Activated CD4-positive, alpha-beta memory T cell treated with anti-CD3 and anti-CD28 coated beads for 36 hours (primary cell): ENCODE measurements at regions of chr9 and their contacts with region 1.

Region 1: GRCh38 chr9:124040935-124041816 is 29.6 kb downstream of the LHX2 start:
- DNase-seq: peak; percentile 62
- H3K4me3 Mint-ChIP-seq: no peak overlapping the region
- H3K27ac Mint-ChIP-seq: no peak overlapping the region
- H3K4me1 Mint-ChIP-seq: peaks cover 13% of the 10 kb centered on the region
- H3K27me3 Mint-ChIP-seq: peaks cover 62% of the 10 kb centered on the region

Region 2: GRCh38 chr9:123544007-123544827 is 497.0 kb before region 1 on chr9:
- CTCF ChIA-PET with region 1: interaction called, 51 read pairs
- POLR2A ChIA-PET with region 1: no interaction called
- intact Hi-C with region 1: loop called (anchors 1 kb)
- DNase-seq: peak; percentile 19
- H3K4me3 Mint-ChIP-seq: no peak overlapping the region
- H3K27ac Mint-ChIP-seq: no peak overlapping the region
- H3K4me1 Mint-ChIP-seq: peaks cover 8% of the 10 kb centered on the region
- H3K27me3 Mint-ChIP-seq: no peaks in the 10 kb centered on the region

Region 3: GRCh38 chr9:123957115-123957721 is 84.0 kb before region 1 on chr9:
- CTCF ChIA-PET with region 1: interaction called, 6 read pairs
- POLR2A ChIA-PET with region 1: no interaction called
- intact Hi-C with region 1: loop called (anchors 2 kb)
- DNase-seq: no peak
- H3K4me3 Mint-ChIP-seq: no peak overlapping the region
- H3K27ac Mint-ChIP-seq: no peak overlapping the region
- H3K4me1 Mint-ChIP-seq: peaks cover 4% of the 10 kb centered on the region
- H3K27me3 Mint-ChIP-seq: peaks cover 17% of the 10 kb centered on the region

Region 4: GRCh38 chr9:124017929-124018729 is 23.0 kb before region 1 on chr9:
- CTCF ChIA-PET with region 1: interaction called, 10 read pairs
- POLR2A ChIA-PET with region 1: no interaction called
- intact Hi-C with region 1: no loop called
- DNase-seq: no peak
- H3K4me3 Mint-ChIP-seq: no peak overlapping the region
- H3K27ac Mint-ChIP-seq: no peak overlapping the region
- H3K4me1 Mint-ChIP-seq: peaks cover 30% of the 10 kb centered on the region
- H3K27me3 Mint-ChIP-seq: peaks cover 82% of the 10 kb centered on the region

Region 5: DNA sequence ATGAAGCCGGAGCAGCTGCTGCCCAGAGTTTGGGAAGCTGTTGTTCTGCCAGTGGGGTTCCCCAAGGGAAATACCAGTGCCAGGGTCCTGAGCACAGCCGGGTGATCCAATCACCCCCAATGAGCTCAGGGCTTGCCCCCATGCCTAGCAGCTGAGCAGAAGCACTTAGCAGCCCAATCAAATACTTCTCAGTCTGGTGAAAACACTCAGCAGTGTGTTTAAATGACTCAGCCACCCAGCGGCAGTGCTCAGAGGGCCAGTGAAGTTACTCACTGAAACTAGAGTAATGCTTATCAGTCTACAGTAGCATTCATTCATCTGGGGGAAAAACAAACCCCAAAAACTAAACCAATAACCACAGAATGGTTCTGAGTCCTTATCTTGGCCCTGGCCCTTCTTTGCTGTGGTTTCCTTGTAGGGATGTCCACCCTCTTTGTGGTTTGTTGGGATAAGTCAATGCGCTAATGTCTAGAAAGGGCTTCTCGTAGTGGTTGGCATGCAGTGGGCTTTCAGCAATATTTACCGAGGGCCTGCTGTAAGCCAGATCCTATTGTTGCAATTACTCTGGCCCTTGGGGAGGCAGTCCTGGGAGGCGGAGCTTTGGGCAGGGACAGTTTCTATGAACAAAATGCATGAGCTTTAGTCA is 13.5 kb after region 1 on chr9:
- CTCF ChIA-PET with region 1: interaction called, 55 read pairs
- POLR2A ChIA-PET with region 1: no interaction called
- intact Hi-C with region 1: no loop called
- DNase-seq: peak; percentile 68
- H3K4me3 Mint-ChIP-seq: no peak overlapping the region
- H3K27ac Mint-ChIP-seq: no peak overlapping the region
- H3K4me1 Mint-ChIP-seq: no peaks in the 10 kb centered on the region
- H3K27me3 Mint-ChIP-seq: peaks cover 33% of the 10 kb centered on the region